Esophagus muscularis mucosa (tissue), 4 donors: ENCODE measurements at regions of chr7 and their contacts with region 1.

Region 1: GRCh38 chr7:31744294-31744874 is 57.4 kb downstream of the PPP1R17 start:
- DNase-seq: no peak
- H3K4me3 ChIP-seq: no peak overlapping the region
- H3K27ac ChIP-seq: no peak overlapping the region
- H3K4me1 ChIP-seq: no peaks in the 10 kb centered on the region
- H3K27me3 ChIP-seq: no peaks in the 10 kb centered on the region
- CTCF ChIP-seq: peak; percentile 84 to 93 (median 87)
- EP300 ChIP-seq: no peak
- POLR2A ChIP-seq: no peak

Region 2: DNA sequence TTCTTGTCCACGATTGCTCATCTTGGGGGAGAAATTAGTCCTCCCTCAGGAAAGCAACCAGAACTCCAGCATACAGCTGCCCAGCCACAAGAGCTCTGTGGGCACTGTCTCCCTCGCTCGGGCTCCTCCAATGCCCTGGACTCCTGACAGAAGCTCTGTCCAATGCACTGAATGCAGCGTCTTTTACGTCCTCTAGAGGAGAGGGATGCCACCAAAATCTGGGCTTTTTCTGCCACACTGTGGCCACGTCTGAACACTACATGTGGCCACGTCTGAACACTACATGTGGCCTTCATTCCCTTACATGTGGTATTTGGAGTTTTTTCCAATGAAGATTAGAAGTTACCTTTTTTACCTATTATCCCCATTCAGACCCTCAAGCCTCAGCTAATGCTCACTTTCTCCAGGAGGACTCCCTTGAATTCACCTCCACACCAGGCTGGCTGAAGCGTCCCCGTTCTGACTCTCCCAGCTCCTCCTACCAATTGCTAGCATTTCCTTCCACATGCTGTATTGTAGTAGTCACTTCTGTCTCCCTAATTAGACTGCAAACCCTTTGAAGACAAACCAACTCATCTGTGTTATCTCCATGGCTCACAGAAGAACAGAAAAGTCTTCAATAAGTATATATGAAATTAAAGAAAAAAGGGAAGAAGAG is 460.1 kb after region 1 on chr7:
- intact Hi-C with region 1: loop called (anchors 1 kb)
- DNase-seq: peak; percentile 90
- H3K4me3 ChIP-seq: peak overlapping the region; percentile 35 to 47 (median 40)
- H3K27ac ChIP-seq: peak overlapping the region in 1 of 4 donors; percentile 42
- H3K4me1 ChIP-seq: peaks cover 0 to 8% (median 4%) of the 10 kb centered on the region in 4 donors
- H3K27me3 ChIP-seq: no peaks in the 10 kb centered on the region
- CTCF ChIP-seq: peak; percentile 88 to 91 (median 89)
- EP300 ChIP-seq: no peak
- POLR2A ChIP-seq: no peak

Region 3: GRCh38 chr7:32347244-32347828 is 603.0 kb after region 1 on chr7:
- intact Hi-C with region 1: loop called (anchors 10 kb)
- DNase-seq: no peak
- H3K4me3 ChIP-seq: no peak overlapping the region
- H3K27ac ChIP-seq: no peak overlapping the region
- H3K4me1 ChIP-seq: no peaks in the 10 kb centered on the region
- H3K27me3 ChIP-seq: no peaks in the 10 kb centered on the region
- CTCF ChIP-seq: peak; percentile 37 to 70 (median 58)
- EP300 ChIP-seq: no peak
- POLR2A ChIP-seq: no peak